Aorta (tissue), 5 donors: ENCODE measurements at regions of chr16 and their contacts with region 1.

Region 1: GRCh38 chr16:30335598-30336474 is 19.3 kb downstream of the CD2BP2 start:
- DNase-seq: peak in 1 of 2 donors; percentile 69
- ATAC-seq: no peak
- H3K4me3 ChIP-seq: peak overlapping the region in 1 of 2 donors; percentile 40
- H3K27ac ChIP-seq: peak overlapping the region in 1 of 2 donors; percentile 15
- H3K4me1 ChIP-seq: no peaks in the 10 kb centered on the region
- H3K27me3 ChIP-seq: no peaks in the 10 kb centered on the region

Region 2: DNA sequence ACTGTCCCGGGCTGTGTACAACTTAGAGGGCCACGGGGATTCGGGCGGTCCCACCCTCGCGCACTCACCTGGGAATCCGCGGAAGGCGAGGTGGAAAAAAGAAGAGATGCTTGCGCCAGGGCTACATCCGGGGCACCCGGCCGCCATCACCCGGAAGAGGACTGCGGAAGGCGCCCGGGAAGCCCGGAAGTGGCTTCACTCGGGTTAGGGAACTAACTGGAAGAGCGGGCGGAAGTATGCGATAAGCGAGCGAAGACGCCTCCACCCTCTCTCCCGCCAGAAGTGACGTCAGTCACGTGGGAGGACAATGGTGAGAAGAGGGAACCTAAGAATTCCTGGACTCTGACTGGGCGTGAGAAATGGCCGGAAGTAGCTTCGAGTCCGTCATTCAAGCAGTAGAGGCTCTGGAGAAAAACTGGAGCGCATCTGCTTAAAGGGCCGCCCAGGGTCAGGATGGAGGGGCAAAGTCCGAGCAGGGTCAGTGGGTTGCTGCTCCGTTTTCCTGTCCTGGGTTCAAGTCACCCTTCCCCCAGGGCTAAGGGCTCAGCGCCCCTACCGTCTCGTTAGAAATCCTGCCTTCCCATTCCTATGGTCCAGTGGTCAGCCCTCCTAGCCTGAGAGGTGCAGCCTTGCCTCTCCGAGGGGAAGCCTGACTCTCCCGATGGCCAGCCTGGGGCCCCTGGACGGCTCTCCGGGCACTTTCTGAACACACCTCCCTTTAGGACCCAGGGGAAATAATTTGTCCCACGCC is 19.5 kb after region 1 on chr16 and contains the start of gene CD2BP2:
- intact Hi-C with region 1: loop called in 1 of 2 experiments (anchors 2 kb)
- DNase-seq: peak; percentile 98
- ATAC-seq: peak; percentile 95
- H3K4me3 ChIP-seq: peak within 1 kb of the TSS; percentile 81 to 82
- H3K27ac ChIP-seq: peak within 1 kb of the TSS; percentile 25 to 97
- H3K4me1 ChIP-seq: no peaks in the 10 kb centered on the region
- H3K27me3 ChIP-seq: no peaks in the 10 kb centered on the region
- total RNA-seq, gene CD2BP2: 42.6 to 51.3 TPM

Region 3: GRCh38 chr16:30370444-30371247 is 34.8 kb after region 1 on chr16 and contains the start of gene TBC1D10B:
- intact Hi-C with region 1: loop called in 1 of 2 experiments (anchors 2 kb)
- DNase-seq: peak; percentile 98
- ATAC-seq: peak; percentile 96
- H3K4me3 ChIP-seq: peak within 1 kb of the TSS; percentile 92
- H3K27ac ChIP-seq: peak within 1 kb of the TSS; percentile 20 to 39
- H3K4me1 ChIP-seq: peaks cover 0 to 4% of the 10 kb centered on the region in 2 donors
- H3K27me3 ChIP-seq: no peaks in the 10 kb centered on the region
- total RNA-seq, gene TBC1D10B: 30.7 to 38.0 TPM